CD14-positive monocyte (primary cell): ENCODE measurements at regions of chr22 and their contacts with region 1.

Region 1: GRCh38 chr22:16824716-16825678 is at the start of gene XKR3:
- DNase-seq: peak; percentile 83 to 94 (median 88)
- H3K4me3 ChIP-seq: peak within 1 kb of the TSS; percentile 30 to 91 (median 73)
- H3K4me3 Mint-ChIP-seq: peak within 1 kb of the TSS; percentile 65 to 88
- H3K27ac ChIP-seq: peak within 1 kb of the TSS; percentile 69 to 92
- H3K27ac Mint-ChIP-seq: peak within 1 kb of the TSS; percentile 88 to 93 (median 92)
- H3K4me1 ChIP-seq: peaks cover 19 to 32% of the 10 kb centered on the region in 2 donors
- H3K4me1 Mint-ChIP-seq: peaks cover 26% of the 10 kb centered on the region
- H3K27me3 ChIP-seq: no peaks in the 10 kb centered on the region
- H3K27me3 Mint-ChIP-seq: peaks cover 0 to 3% (median 0%) of the 10 kb centered on the region in 3 donors
- CTCF ChIP-seq: no peak
- polyA plus RNA-seq, gene XKR3: 0.07 TPM in 1 of 3 donors, not detected in the others

Region 2: DNA sequence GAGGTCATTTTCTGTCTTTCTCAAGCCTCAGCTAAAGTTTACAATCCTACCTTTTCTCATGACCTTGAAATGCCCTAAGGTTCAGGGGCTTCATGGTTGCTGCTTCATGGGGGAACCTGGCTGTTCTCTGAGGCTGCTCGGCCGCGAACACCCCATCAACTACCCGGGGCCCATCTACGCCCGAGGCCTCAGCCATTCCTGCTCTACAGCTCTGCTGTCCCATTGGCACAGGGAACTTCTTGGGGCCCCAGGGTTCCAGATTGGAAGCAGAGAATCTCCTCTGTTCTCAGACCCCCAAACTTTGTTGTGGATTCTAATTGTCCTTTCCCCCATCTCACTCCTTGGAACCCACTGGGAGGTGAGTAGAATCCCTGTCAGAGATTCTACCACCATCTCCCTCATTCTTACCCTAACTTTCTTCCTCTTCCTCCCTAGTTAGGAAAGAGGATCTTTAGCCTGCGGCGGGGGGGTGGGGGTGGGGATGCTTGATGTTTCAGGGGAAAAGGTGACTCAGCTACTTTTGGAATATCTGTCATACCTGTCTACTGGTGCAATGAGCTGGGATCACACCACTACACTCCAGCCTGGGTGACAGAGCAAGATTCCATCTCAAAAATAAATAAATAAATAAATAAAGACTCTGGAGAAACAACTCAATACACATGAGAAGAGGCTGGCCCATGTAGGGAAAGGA is 239.0 kb before region 1 on chr22:
- intact Hi-C with region 1: no loop called
- DNase-seq: no peak
- H3K4me3 ChIP-seq: no peak overlapping the region
- H3K4me3 Mint-ChIP-seq: no peak overlapping the region
- H3K27ac ChIP-seq: no peak overlapping the region
- H3K27ac Mint-ChIP-seq: peak overlapping the region in 1 of 7 donors; percentile 59
- H3K4me1 ChIP-seq: peaks cover 2 to 4% of the 10 kb centered on the region in 2 donors
- H3K4me1 Mint-ChIP-seq: peaks cover 2% of the 10 kb centered on the region
- H3K27me3 ChIP-seq: no peaks in the 10 kb centered on the region
- H3K27me3 Mint-ChIP-seq: peaks cover 0 to 11% (median 7%) of the 10 kb centered on the region in 3 donors
- CTCF ChIP-seq: no peak

Region 3: GRCh38 chr22:16699331-16699730 is 125.7 kb before region 1 on chr22:
- intact Hi-C with region 1: no loop called
- DNase-seq: no peak
- H3K4me3 ChIP-seq: no peak overlapping the region
- H3K4me3 Mint-ChIP-seq: peak overlapping the region in 1 of 2 donors; percentile 39
- H3K27ac ChIP-seq: no peak overlapping the region
- H3K27ac Mint-ChIP-seq: no peak overlapping the region
- H3K4me1 ChIP-seq: no peaks in the 10 kb centered on the region
- H3K4me1 Mint-ChIP-seq: peaks cover 4% of the 10 kb centered on the region
- H3K27me3 ChIP-seq: no peaks in the 10 kb centered on the region
- H3K27me3 Mint-ChIP-seq: peaks cover 0 to 8% (median 6%) of the 10 kb centered on the region in 3 donors
- CTCF ChIP-seq: no peak

Region 4: GRCh38 chr22:16721961-16722360 is 103.0 kb before region 1 on chr22:
- intact Hi-C with region 1: loop called in 1 of 2 experiments (anchors 5 kb)
- DNase-seq: peak; percentile 73 to 87 (median 82)
- H3K4me3 ChIP-seq: peak overlapping the region; percentile 28 to 68 (median 37)
- H3K4me3 Mint-ChIP-seq: peak overlapping the region; percentile 55 to 75
- H3K27ac ChIP-seq: peak overlapping the region; percentile 84 to 94
- H3K27ac Mint-ChIP-seq: peak overlapping the region; percentile 89 to 99 (median 98)
- H3K4me1 ChIP-seq: peaks cover 22 to 39% of the 10 kb centered on the region in 2 donors
- H3K4me1 Mint-ChIP-seq: peaks cover 38% of the 10 kb centered on the region
- H3K27me3 ChIP-seq: peaks cover 0 to 11% of the 10 kb centered on the region in 2 donors
- H3K27me3 Mint-ChIP-seq: peaks cover 7 to 12% (median 8%) of the 10 kb centered on the region in 3 donors
- CTCF ChIP-seq: no peak

Region 5: GRCh38 chr22:16844529-16844928 is 19.5 kb after region 1 on chr22:
- intact Hi-C with region 1: no loop called
- DNase-seq: no peak
- H3K4me3 ChIP-seq: no peak overlapping the region
- H3K4me3 Mint-ChIP-seq: no peak overlapping the region
- H3K27ac ChIP-seq: no peak overlapping the region
- H3K27ac Mint-ChIP-seq: no peak overlapping the region
- H3K4me1 ChIP-seq: peaks cover 3 to 13% of the 10 kb centered on the region in 2 donors
- H3K4me1 Mint-ChIP-seq: peaks cover 13% of the 10 kb centered on the region
- H3K27me3 ChIP-seq: no peaks in the 10 kb centered on the region
- H3K27me3 Mint-ChIP-seq: peaks cover 0 to 6% (median 3%) of the 10 kb centered on the region in 3 donors
- CTCF ChIP-seq: no peak

Region 6: DNA sequence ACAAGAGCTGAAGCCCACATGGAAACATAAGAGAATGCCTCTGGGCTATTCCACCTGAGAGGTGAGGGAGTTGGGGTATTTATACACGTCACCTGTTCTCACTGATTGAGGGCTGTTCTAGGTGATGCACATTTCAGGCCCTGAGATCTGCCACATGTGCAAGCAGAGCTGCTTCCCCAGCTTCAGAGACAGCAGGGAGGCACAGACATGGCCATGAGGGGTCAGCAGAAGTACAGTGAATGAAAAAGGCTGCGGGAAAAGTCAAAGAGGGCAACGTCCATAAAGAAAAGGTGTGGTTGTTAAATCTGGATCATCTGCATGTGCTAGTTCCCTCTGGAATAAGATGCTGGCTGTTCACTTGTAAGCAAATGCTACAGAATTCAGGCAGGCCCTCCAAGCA is 107.6 kb after region 1 on chr22:
- intact Hi-C with region 1: no loop called
- DNase-seq: no peak
- H3K4me3 ChIP-seq: no peak overlapping the region
- H3K4me3 Mint-ChIP-seq: no peak overlapping the region
- H3K27ac ChIP-seq: no peak overlapping the region
- H3K27ac Mint-ChIP-seq: no peak overlapping the region
- H3K4me1 ChIP-seq: no peaks in the 10 kb centered on the region
- H3K4me1 Mint-ChIP-seq: no peaks in the 10 kb centered on the region
- H3K27me3 ChIP-seq: no peaks in the 10 kb centered on the region
- H3K27me3 Mint-ChIP-seq: peaks cover 7 to 16% (median 11%) of the 10 kb centered on the region in 3 donors
- CTCF ChIP-seq: no peak